ENCODE measurements at regions of chr1 and their contacts with region 1.

Region 1: DNA sequence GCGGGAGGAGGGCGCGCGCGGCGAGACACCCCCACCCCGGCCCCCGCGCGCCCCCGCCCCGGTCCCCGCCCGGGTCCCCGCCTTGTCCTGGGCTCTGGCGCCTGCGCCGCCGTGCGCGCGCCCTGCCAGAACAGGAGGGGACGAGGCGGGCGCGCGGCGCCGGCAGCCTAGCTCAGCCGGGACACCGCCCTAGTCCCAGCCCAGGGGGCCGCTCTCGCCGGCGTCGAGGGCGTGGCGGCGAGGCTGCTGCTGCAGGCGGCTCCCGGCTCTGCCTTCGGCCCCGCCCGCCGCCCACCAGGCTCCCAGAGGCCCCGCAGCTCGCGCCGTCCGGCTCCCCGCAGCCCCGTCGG is at the start of gene RCAN3:
- H3K4me3 Mint-ChIP-seq: peak within 1 kb of the TSS; percentile 80
- H3K27ac Mint-ChIP-seq: peak within 1 kb of the TSS; percentile 92
- H3K4me1 Mint-ChIP-seq: peaks cover 44% of the 10 kb centered on the region
- H3K27me3 Mint-ChIP-seq: peaks cover 3% of the 10 kb centered on the region

Region 2: GRCh38 chr1:24201941-24202440 is 300.7 kb before region 1 on chr1:
- intact Hi-C with region 1: no loop called
- H3K4me3 Mint-ChIP-seq: no peak overlapping the region
- H3K27ac Mint-ChIP-seq: no peak overlapping the region
- H3K4me1 Mint-ChIP-seq: peaks cover 13% of the 10 kb centered on the region
- H3K27me3 Mint-ChIP-seq: peaks cover 21% of the 10 kb centered on the region

Region 3: GRCh38 chr1:24481101-24481500 is 21.6 kb before region 1 on chr1:
- intact Hi-C with region 1: loop called (anchors 2 kb)
- H3K4me3 Mint-ChIP-seq: peak overlapping the region; percentile 9
- H3K27ac Mint-ChIP-seq: peak overlapping the region; percentile 89
- H3K4me1 Mint-ChIP-seq: peaks cover 41% of the 10 kb centered on the region
- H3K27me3 Mint-ChIP-seq: no peaks in the 10 kb centered on the region